Right ventricle myocardium inferior (tissue), 1 donor: ENCODE measurements at regions of chr14 and their contacts with region 1.

Region 1: GRCh38 chr14:61475316-61475715 is 153.9 kb downstream of the PRKCH start:
- DNase-seq: no peak
- ATAC-seq: no peak

Region 2: DNA sequence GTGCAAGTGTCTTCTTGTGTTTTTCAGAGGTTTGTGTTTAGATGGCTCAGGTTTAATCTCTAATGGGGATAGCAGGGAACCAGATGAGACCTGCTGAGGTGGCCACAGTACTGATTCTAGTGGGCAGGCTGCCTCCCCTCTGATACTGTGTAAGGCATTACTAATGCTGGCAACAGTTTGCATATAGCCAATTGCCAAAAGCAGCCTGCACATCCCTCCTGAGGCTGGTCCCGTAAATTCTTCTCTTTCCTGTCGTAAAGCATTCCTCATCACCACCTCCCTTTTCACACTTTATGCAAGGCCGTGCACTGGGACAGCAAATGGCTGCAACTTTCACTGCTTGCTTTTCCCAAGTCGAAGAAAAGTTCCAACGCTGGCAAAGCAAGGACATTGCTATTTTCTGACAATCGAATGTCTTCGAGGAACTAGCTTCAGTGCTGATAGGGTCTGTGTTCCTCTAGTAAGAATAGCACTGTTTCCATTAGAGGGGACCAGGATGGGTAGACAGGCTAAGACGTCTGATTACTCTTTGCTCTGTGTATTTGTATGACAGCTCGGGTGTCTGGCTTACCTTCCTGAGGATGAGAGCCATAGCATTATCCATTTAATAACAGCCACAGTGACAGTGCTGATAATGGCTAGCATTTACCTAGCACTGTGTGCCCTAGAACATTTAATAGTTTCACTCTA is 41.8 kb after region 1 on chr14:
- intact Hi-C with region 1: loop called (anchors 2 kb)
- DNase-seq: no peak
- ATAC-seq: peak; percentile 51

Region 3: DNA sequence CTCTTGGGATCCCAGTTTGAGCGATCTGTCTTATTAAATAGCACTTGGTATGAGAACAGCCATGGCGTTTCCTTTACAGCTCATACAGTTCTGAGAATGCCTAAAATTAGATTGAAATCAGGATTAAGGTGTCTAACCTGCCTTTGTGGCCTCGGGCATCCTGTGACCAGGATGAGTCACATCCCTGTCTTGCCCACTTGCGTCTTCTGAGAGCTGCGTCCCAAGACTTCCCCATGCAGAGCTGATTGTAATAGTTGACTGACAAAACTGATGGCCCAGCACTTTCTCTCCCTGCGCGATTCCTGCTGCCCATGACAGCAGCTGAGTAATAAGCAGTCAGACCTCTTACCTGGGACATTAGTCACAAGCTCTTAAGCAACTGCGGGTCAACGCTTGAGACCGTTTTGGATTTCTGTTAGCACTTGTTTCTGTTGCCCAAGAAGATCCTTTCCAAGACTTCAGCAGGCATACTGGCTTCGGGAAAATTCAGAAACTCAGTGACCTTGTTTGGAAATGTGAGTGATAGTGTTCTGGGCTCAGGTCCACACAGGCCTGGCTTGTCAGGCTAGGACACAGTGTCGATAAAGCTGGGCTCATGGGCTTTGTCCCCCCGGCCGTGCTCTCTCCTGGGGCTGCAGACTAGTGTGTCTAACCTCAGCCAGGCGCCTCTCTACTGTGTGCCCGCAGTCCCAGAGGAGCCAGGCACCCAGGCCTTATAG is 50.1 kb after region 1 on chr14:
- intact Hi-C with region 1: loop called (anchors 2 kb)
- DNase-seq: no peak
- ATAC-seq: peak; percentile 87

Region 4: GRCh38 chr14:61585598-61586543 is 110.6 kb after region 1 on chr14:
- intact Hi-C with region 1: loop called (anchors 5 kb)
- DNase-seq: peak; percentile 79
- ATAC-seq: peak; percentile 47

Region 5: GRCh38 chr14:61761959-61762786 is 286.9 kb after region 1 on chr14 and contains the start of gene SNAPC1:
- intact Hi-C with region 1: loop called (anchors 5 kb)
- DNase-seq: peak; percentile 98
- ATAC-seq: peak; percentile 99
- total RNA-seq, gene SNAPC1: 11.8 TPM